ENCODE measurements at regions of chr1 and their contacts with region 1.

Region 1: DNA sequence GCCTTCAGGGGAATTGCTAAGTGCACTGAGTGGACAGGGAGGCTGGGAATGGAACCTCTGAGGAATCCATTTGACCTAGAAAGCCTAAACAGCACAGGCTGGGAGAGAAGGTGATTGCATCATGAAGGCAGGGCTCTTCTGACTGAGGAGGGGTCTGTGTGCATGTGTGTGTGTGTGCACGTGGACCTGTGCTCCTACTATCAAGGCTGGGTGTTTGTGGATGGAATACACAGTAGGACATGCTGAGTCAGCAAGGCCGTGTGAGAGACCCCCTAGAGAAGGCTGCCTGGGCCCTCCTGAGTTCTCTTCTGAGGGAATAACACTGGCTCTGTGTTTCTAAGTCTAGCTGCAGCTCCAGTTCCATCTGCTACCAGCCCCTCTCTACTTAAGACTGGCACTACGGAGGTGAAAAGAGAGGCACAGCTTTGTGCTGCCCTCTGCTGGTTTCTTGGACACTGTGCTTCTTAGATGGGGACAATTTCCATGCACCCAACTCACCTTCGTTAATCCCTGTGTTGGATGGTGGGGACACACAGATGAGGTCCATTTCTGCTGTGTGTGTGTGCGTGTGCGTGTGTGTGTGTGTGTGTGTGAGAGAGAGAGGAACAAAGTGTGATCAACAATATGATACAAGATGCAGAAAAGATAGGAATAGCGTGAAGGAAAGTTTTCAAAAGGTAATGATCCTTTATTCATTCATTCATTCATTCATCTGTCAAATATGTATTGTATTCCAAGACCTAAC is 6.2 kb upstream of the EFCAB14 start:
- DNase-seq: peak; percentile 16
- ATAC-seq: peak; percentile 100
- H3K4me3 ChIP-seq: no peak overlapping the region
- H3K27ac ChIP-seq: no peak overlapping the region
- H3K4me1 ChIP-seq: no peaks in the 10 kb centered on the region
- H3K27me3 ChIP-seq: no peaks in the 10 kb centered on the region; a peak in 2 of 4 replicates
- CTCF ChIP-seq: peak; percentile 84 to 91 (median 85)
- EP300 ChIP-seq: no peak
- POLR2A ChIP-seq: no peak
- RAD21 ChIP-seq: peak; percentile 88

Region 2: DNA sequence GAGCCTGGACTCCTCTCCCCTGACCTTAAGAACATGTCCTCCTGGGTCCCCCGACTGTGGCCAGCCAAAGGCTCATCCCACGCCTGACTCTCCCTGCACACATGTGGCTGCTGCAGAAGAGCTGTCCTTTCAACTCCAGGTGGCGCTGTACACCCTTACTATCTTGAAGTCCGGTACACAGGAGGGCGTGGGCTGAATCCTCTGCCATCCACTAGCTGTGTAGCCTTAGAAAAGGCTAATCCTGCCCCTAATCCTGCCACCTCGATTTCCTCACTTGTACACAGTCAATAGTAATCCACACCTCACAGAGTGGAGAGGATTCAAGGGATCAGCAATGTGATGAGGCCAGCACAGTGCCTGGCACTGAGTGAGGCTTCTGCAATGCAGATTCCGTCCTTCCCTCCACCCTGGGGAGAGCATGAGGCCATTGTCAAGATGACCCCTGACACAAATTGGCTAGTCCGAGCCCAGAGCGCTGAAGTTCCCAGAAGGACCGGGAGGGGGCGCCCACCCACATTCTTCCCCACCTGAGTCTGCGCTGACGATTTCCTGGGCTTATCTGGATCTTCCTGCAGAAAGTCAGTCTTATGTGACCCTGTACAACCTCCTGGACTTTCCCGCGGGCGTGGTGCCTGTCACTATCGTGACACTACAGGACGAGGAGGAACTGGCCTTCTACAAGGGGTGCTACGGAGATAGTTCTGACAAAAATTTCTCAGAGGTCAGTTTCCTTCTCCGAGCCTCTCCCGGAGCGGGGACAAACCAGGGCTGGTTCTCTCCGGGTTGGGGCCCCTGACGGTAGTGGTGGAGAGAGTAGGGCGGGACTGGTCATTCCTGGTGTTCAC is 282.6 kb before region 1 on chr1:
- CTCF ChIA-PET with region 1: interaction called, 4 read pairs
- POLR2A ChIA-PET with region 1: no interaction called
- RAD21 ChIA-PET with region 1: no interaction called
- SMC1A ChIA-PET with region 1: no interaction called
- in situ Hi-C with region 1: no loop called
- intact Hi-C with region 1: loop called (anchors 2 kb)
- DNase-seq: no peak
- ATAC-seq: peak; percentile 89
- H3K4me3 ChIP-seq: no peak overlapping the region; the same call in 1 of the 2 replicates
- H3K27ac ChIP-seq: no peak overlapping the region
- H3K4me1 ChIP-seq: peaks cover 4% of the 10 kb centered on the region; the same call in 1 of the 2 replicates
- H3K27me3 ChIP-seq: peaks cover 4 to 11% of the 10 kb centered on the region in 2 experiments
- CTCF ChIP-seq: peak; percentile 75 to 89 (median 88)
- EP300 ChIP-seq: no peak
- POLR2A ChIP-seq: no peak
- RAD21 ChIP-seq: 0 out of 2 replicates have a peak, but pooled peaks have one; percentile 15

Region 3: GRCh38 chr1:46477153-46477929 is 247.8 kb before region 1 on chr1:
- CTCF ChIA-PET with region 1: interaction called, 5 read pairs
- POLR2A ChIA-PET with region 1: no interaction called
- RAD21 ChIA-PET with region 1: no interaction called
- SMC1A ChIA-PET with region 1: no interaction called
- in situ Hi-C with region 1: no loop called
- intact Hi-C with region 1: loop called (anchors 2 kb)
- DNase-seq: peak; percentile 17
- ATAC-seq: peak; percentile 95
- H3K4me3 ChIP-seq: no peak overlapping the region
- H3K27ac ChIP-seq: no peak overlapping the region
- H3K4me1 ChIP-seq: no peaks in the 10 kb centered on the region
- H3K27me3 ChIP-seq: peaks cover 0 to 5% of the 10 kb centered on the region in 2 experiments; a peak in 1 of 4 replicates
- CTCF ChIP-seq: peak; percentile 92 to 98 (median 93); a peak in 5 of 6 replicates
- EP300 ChIP-seq: no peak
- POLR2A ChIP-seq: no peak
- RAD21 ChIP-seq: peak; percentile 78

Region 4: DNA sequence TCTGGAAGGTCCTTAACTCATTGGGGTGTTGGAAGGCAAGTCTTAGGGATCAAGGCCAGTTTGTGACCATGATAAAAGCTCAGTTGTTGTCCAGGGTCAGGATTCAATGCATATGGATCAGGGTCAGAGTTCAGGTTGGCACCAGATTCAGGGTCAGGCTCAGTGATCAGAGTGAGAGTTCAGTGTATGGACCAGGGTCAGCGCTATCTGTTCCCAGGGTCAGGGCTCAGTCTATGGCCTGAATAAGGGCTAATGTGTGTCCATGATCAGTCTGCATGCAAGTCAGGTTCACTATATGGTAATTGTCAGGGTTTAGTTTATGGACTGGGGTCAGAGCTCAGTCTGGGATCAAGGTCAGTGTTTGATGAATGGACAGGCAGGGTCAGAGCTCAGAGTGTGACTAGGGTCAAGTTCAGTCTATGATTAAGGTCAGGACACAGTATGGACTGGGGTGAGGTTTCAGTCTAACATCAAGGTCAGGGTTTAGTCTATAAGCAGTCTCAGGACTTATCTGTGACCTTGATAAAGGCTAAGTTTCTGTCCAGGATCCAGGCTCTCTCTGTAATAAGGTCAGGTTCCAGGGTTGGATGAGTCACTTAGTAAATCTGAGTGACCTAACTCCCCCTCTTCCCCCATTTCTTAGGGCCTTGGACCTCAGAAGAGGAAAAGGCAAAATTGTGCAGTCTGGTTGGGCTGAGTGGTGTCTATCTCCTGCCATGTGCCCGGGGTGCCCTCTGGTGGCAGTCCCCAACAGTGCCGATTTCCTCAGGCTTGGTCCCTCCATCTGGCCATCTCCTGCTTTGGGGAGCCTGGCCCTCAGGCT is 197.5 kb before region 1 on chr1:
- CTCF ChIA-PET with region 1: no interaction called
- POLR2A ChIA-PET with region 1: no interaction called
- RAD21 ChIA-PET with region 1: no interaction called
- SMC1A ChIA-PET with region 1: no interaction called
- in situ Hi-C with region 1: no loop called
- intact Hi-C with region 1: loop called (anchors 5 kb)
- DNase-seq: no peak
- ATAC-seq: peak; percentile 89
- H3K4me3 ChIP-seq: no peak overlapping the region
- H3K27ac ChIP-seq: no peak overlapping the region
- H3K4me1 ChIP-seq: peaks cover 3% of the 10 kb centered on the region
- H3K27me3 ChIP-seq: peaks cover 2 to 3% of the 10 kb centered on the region in 2 experiments; a peak in 2 of 4 replicates
- CTCF ChIP-seq: peak; percentile 96 to 98 (median 97)
- EP300 ChIP-seq: no peak
- POLR2A ChIP-seq: no peak
- RAD21 ChIP-seq: peak; percentile 93

Region 5: GRCh38 chr1:46547481-46548383 is 177.4 kb before region 1 on chr1:
- CTCF ChIA-PET with region 1: interaction called, 3 read pairs
- POLR2A ChIA-PET with region 1: no interaction called
- RAD21 ChIA-PET with region 1: no interaction called
- SMC1A ChIA-PET with region 1: no interaction called
- in situ Hi-C with region 1: no loop called
- intact Hi-C with region 1: loop called (anchors 5 kb)
- DNase-seq: no peak
- ATAC-seq: peak; percentile 75
- H3K4me3 ChIP-seq: no peak overlapping the region
- H3K27ac ChIP-seq: no peak overlapping the region
- H3K4me1 ChIP-seq: no peaks in the 10 kb centered on the region
- H3K27me3 ChIP-seq: peaks cover 10 to 12% of the 10 kb centered on the region in 2 experiments
- CTCF ChIP-seq: peak; percentile 43 to 49 (median 46); a peak in 5 of 6 replicates
- EP300 ChIP-seq: no peak
- POLR2A ChIP-seq: no peak
- RAD21 ChIP-seq: peak; percentile 36; the same call in 1 of the 2 replicates

Region 6: DNA sequence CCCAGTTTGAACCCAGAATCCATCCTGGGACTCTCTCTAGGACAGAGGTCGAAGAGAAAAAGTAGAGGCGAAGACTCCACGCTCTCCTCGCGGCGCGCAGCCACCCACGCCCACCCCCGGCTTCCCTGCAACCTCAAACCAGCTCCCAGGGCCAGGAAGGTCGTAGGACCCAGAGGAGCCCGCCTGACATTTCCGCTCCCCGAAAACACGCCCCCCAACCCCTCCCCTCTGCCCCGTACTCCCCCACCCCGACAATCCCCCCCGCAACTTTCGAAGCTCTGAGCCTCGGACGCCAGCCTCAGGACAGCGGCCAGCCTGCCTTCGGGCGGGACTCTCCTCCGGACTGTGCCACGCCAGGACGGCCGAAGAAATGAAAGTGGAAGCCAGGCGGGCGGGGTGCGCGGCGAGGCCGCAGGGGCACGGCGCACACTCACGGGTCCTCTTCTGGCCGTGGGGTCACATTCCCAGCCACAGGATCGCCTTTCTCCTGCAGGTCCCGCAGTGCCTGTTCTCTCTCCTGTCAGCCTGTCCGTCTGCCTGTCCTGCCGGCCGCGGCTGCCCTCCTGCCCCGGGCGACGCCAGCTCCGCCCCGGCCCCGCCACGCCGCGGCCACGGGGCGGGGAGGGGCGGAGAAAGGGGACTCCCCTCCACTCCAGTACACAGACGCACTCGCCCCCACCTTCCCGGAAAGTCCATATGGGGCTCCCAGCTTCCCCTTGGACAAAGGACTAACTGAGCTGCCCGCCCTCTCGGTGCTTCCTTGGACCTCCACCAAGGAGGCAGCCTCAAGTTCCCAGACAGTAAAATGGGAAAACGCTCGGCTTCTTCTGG is 108.7 kb before region 1 on chr1 and contains the start of gene MOB3C:
- CTCF ChIA-PET with region 1: interaction called, 20 read pairs
- POLR2A ChIA-PET with region 1: interaction called, 3 read pairs
- RAD21 ChIA-PET with region 1: interaction called, 3 read pairs
- SMC1A ChIA-PET with region 1: interaction called, 13 read pairs
- in situ Hi-C with region 1: no loop called
- intact Hi-C with region 1: no loop called
- DNase-seq: peak; percentile 15
- ATAC-seq: peak; percentile 82
- H3K4me3 ChIP-seq: peak within 1 kb of the TSS; percentile 96
- H3K27ac ChIP-seq: peak within 1 kb of the TSS; percentile 84
- H3K4me1 ChIP-seq: peaks cover 48% of the 10 kb centered on the region
- H3K27me3 ChIP-seq: no peaks in the 10 kb centered on the region
- CTCF ChIP-seq: no peak
- EP300 ChIP-seq: no peak
- POLR2A ChIP-seq: peak; percentile 87
- RAD21 ChIP-seq: no peak
- polyA plus RNA-seq, gene MOB3C: 1.0 to 4.1 TPM

Region 7: GRCh38 chr1:46622344-46622743 is 102.8 kb before region 1 on chr1:
- CTCF ChIA-PET with region 1: interaction called, 37 read pairs
- POLR2A ChIA-PET with region 1: interaction called, 3 read pairs
- RAD21 ChIA-PET with region 1: interaction called, 15 read pairs
- SMC1A ChIA-PET with region 1: interaction called, 13 read pairs
- in situ Hi-C with region 1: no loop called
- intact Hi-C with region 1: loop called (anchors 1 kb)
- DNase-seq: no peak
- ATAC-seq: peak; percentile 49; the same call in 2 of the 3 replicates
- H3K4me3 ChIP-seq: no peak overlapping the region
- H3K27ac ChIP-seq: no peak overlapping the region
- H3K4me1 ChIP-seq: peaks cover 15% of the 10 kb centered on the region
- H3K27me3 ChIP-seq: no peaks in the 10 kb centered on the region
- CTCF ChIP-seq: peak; percentile 47 to 56 (median 49); a peak in 5 of 6 replicates
- EP300 ChIP-seq: no peak
- POLR2A ChIP-seq: no peak
- RAD21 ChIP-seq: peak; percentile 58

Region 8: DNA sequence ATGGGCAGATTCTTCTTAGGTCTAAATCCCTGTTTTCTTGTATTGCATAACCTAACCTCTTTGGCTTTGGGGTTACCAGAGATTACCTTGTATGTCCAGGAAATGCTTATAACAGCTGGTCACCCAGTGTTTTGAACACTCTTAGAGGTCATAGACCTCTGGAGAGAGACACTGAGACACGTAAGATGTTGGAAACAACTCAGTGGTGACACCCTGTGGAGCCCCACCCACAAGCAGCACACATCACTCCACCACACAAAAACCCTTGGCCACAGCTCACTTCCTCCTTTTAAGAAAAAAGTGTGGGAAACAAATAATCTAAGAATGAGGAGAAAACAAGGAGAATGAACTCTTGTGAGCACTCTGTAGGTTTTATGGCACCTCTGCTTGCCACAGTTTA is 47.4 kb after region 1 on chr1:
- CTCF ChIA-PET with region 1: no interaction called
- POLR2A ChIA-PET with region 1: no interaction called
- RAD21 ChIA-PET with region 1: no interaction called
- SMC1A ChIA-PET with region 1: no interaction called
- in situ Hi-C with region 1: no loop called
- intact Hi-C with region 1: no loop called
- DNase-seq: no peak
- ATAC-seq: peak; percentile 67; the same call in 2 of the 3 replicates
- H3K4me3 ChIP-seq: no peak overlapping the region
- H3K27ac ChIP-seq: no peak overlapping the region
- H3K4me1 ChIP-seq: no peaks in the 10 kb centered on the region
- H3K27me3 ChIP-seq: no peaks in the 10 kb centered on the region
- CTCF ChIP-seq: no peak
- EP300 ChIP-seq: no peak
- POLR2A ChIP-seq: no peak
- RAD21 ChIP-seq: no peak

Measured in GM12878 (cell line).